ENCODE measurements at regions of chr2 and their contacts with region 1.

Region 1: DNA sequence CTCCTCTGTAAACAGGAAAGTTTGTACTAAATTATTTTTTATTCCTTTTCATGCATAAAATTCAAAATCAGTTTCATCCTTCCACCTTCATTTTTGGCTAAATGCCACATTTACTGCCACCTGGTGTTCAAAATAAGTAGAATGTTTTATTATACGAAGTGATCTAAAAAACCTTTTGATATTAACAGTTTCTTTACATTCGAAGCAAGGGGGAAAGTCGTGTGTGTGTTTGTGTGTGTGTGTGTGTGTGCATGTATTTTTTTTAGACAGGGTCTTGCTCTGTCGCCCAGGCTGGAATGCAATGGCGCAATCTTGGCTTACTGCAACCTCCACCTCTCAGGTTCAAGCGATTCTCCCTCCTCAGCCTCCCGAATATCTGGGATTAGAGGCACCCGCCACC is 9.0 kb upstream of the SCN9A start:
- DNase-seq: peak; percentile 85
- ATAC-seq: peak; percentile 27; the same call in 1 of the 2 replicates
- H3K4me3 ChIP-seq: no peak overlapping the region
- H3K27ac ChIP-seq: no peak overlapping the region
- H3K4me1 ChIP-seq: no peaks in the 10 kb centered on the region
- H3K27me3 ChIP-seq: no peaks in the 10 kb centered on the region
- CTCF ChIP-seq: peak; percentile 85

Region 2: DNA sequence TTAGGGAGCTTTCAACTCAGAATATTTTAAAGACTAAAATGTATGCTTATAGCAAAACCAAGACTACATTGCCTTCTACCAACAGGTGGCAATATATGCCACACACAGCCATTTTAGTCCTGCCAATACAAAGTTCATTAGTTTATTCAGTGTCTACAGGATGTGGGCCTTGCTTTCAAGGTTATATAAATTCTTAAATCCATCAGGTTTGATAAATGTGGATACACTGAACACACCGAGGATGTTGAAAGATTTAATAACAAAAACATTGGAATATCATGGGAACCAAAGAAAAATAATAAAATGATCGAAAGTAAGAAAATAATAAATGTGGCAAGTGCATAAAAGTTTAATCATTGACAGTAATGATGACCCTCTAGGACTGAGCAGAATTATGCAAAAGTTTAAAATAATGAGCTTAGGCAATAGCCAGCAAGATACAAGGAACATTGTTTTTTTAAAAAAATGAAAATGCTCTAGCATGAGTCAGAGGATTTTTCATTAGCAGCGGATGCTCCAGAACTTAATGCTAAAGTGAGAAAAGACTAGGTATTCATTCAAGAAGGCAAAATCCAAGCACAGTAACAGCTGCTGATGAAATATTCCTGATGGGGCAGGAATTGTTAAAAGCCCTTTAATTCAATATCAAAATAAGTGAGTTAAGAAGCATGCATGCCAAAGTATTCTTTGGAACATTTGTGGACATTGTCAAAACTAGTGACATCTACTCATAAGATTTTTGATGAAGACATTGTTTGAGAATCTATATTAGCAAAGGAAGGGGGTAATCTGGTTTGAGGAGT is 23.2 kb before region 1 on chr2:
- CTCF ChIA-PET with region 1: interaction called, 4 read pairs
- POLR2A ChIA-PET with region 1: no interaction called
- intact Hi-C with region 1: loop called (anchors 1 kb)
- DNase-seq: peak; percentile 73
- ATAC-seq: peak; percentile 93
- H3K4me3 ChIP-seq: no peak overlapping the region
- H3K27ac ChIP-seq: no peak overlapping the region
- H3K4me1 ChIP-seq: peaks cover 12% of the 10 kb centered on the region
- H3K27me3 ChIP-seq: no peaks in the 10 kb centered on the region
- CTCF ChIP-seq: peak; percentile 95